WTC11 (cell line): ENCODE measurements at regions of chr12 and their contacts with region 1.

Region 1: GRCh38 chr12:104637604-104638003 is 180.9 kb downstream of the CHST11 start:
- DNase-seq: no peak
- ATAC-seq: no peak
- H3K4me3 Mint-ChIP-seq: no peak overlapping the region
- H3K27ac Mint-ChIP-seq: no peak overlapping the region
- H3K4me1 Mint-ChIP-seq: peaks cover 14% of the 10 kb centered on the region
- H3K27me3 Mint-ChIP-seq: no peaks in the 10 kb centered on the region; the same call in 1 of the 2 replicates
- CTCF ChIP-seq: no peak

Region 2: GRCh38 chr12:104263580-104264358 is 373.8 kb before region 1 on chr12:
- CTCF ChIA-PET with region 1: no interaction called
- POLR2A ChIA-PET with region 1: interaction called, 10 read pairs
- DNase-seq: no peak
- ATAC-seq: no peak
- H3K4me3 Mint-ChIP-seq: no peak overlapping the region
- H3K27ac Mint-ChIP-seq: peak overlapping the region; percentile 16
- H3K4me1 Mint-ChIP-seq: peaks cover 11% of the 10 kb centered on the region
- H3K27me3 Mint-ChIP-seq: no peaks in the 10 kb centered on the region
- CTCF ChIP-seq: no peak